Gastrocnemius medialis (tissue), 4 donors: ENCODE measurements at regions of chr1 and their contacts with region 1.

Region 1: DNA sequence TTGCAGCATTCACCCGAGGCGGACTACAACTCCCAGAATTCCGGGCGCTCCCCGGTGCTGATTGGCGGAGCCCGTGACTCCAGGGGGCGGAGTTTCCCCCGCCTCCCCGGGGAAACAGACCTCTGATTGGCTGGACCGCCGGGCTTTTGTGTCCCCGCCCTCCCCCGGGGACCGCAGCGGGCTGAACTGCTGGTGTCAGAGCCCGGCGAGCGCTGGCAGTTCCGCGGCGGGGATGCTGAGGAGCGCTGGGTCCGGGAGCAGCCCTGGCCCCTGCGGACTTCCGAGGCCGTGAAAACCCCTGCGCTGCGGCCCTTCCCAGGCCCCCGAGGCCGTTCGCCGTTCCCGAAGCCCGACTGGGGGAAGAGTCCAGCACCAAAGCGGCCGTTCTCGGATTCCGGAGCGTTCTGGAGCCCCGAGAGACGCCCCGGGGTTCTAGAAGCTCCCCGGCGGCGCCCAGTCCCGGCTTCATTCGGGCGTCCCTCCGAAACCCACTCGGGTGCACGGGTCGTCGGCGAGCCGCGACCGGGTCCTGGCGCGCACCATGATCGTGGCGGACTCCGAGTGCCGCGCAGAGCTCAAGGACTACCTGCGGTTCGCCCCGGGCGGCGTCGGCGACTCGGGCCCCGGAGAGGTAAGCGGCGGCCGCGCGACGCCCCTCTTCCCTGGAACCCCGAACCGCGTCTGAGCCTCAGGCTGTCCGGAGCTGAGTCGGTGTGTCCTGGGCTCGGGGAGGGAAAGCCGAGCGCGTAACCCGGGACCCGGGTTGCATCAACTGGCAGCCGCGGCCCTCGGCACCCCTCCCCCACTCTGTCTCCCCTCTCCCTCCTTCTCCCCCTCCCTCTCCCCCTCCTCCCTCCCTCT is at the start of gene SESN2:
- DNase-seq: peak; percentile 99 to 100
- ATAC-seq: peak; percentile 97
- H3K4me3 ChIP-seq: peak within 1 kb of the TSS; percentile 94 to 99 (median 96)
- H3K27ac ChIP-seq: peak within 1 kb of the TSS; percentile 92 to 98 (median 94)
- H3K4me1 ChIP-seq: peaks cover 29 to 33% of the 10 kb centered on the region in 2 donors
- H3K27me3 ChIP-seq: no peaks in the 10 kb centered on the region
- CTCF ChIP-seq: no peak
- POLR2A ChIP-seq: peak; percentile 99 to 100
- total RNA-seq, gene SESN2: 5.6 to 18.9 (median 12.4) TPM

Region 2: DNA sequence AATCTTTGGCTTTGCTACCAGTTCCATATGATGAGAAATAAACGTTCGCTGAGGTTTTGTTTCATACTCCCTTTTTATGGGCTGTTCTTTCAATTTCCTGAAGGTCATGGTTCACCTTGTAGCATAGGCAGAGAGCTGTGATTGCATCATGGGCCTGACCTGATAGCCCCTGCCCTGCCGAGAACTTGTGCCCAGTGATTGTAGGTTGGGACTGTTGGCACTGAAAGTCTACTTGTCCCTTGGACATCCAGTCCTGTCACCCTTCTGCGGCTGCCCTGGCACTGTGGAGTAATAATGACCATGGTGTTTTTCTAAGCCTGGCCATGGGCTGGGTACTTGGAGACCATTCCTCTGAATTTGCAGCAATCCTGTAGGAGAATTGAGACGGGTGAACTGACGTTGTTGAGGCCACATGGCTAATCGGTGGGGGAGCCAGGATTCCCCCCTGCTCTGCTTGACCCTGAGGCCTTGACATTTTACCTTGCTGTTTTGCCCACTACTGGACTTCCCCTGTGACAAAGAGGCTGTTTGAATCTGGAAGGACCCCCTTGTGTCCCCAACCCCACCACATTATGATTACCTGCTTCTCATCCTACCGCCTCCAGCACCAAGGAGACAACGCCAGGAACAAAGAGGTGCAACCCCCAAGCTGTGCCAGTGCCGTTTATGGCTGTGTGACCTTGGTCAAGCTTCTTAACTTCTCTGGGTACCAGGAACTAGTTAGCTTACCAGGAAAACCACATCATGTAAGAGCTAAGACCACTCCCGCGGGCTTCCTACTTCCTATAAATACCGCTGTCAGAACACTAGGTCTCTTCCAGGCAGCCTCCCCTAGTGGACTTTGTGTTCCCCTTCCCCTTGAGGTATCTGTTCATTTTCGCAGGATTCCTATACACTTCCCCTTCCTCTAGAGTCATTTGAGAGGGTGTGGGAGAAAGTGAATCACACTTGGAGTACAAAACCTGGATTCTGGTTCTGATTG is 23.2 kb after region 1 on chr1:
- in situ Hi-C with region 1: no loop called
- intact Hi-C with region 1: loop called (anchors 1 kb)
- DNase-seq: peak in 1 of 2 donors; percentile 17
- ATAC-seq: no peak
- H3K4me3 ChIP-seq: no peak overlapping the region
- H3K27ac ChIP-seq: no peak overlapping the region
- H3K4me1 ChIP-seq: peaks cover 12 to 13% of the 10 kb centered on the region in 2 donors
- H3K27me3 ChIP-seq: no peaks in the 10 kb centered on the region
- CTCF ChIP-seq: no peak
- POLR2A ChIP-seq: no peak

Region 3: GRCh38 chr1:28329395-28330153 is 70.0 kb after region 1 on chr1:
- in situ Hi-C with region 1: loop called in 2 of 4 experiments (anchors 10 kb)
- intact Hi-C with region 1: loop called (anchors 2 kb)
- DNase-seq: peak in 1 of 2 donors; percentile 13
- ATAC-seq: no peak
- H3K4me3 ChIP-seq: peak overlapping the region; percentile 68 to 84 (median 82)
- H3K27ac ChIP-seq: peak overlapping the region; percentile 85 to 94 (median 89)
- H3K4me1 ChIP-seq: peaks cover 14 to 17% of the 10 kb centered on the region in 2 donors
- H3K27me3 ChIP-seq: no peaks in the 10 kb centered on the region
- CTCF ChIP-seq: no peak
- POLR2A ChIP-seq: no peak

Region 4: DNA sequence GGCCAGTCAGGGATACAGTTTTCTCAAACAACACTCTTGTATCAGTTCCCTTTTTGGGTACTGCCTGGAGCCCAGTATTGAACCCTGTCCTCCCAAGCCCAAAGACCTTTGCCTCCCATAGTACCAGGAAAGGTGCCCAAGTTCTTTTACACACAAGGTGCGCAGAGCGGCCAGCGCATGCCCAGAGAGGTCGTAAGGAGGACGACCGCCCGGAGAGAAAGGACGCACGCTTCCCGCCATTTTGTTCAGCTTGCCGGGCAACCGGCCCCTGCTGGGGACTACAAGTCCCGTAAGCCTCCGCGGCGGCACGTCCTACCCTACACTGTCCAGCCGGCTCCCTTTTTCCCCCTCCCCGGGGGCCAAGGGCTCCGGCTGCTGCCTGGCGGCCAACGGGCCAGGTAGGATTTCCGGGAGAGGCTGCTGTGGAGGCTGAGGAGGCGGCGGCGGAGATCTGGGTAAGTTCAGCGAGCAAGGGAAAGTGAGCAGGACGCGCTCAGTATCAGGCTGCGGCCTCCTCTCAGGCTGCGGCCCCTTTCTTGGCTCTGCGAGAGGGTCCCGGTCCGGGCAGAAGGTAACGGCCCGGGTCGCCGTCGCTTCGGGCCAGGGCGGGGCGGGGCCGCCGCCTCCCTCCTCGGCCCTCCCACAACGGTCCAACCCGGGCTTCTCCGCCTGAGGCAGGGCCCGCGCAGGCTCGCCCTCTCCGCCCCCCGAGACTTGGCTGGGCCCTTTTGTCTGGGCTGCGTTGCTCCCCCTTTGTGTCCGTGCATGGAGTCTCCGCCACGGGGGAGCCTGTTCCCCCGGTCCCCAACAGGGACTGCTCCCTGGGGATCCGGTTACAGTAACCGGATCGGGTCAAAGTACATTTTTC is 110.1 kb after region 1 on chr1 and contains the start of gene PHACTR4:
- in situ Hi-C with region 1: no loop called
- intact Hi-C with region 1: loop called (anchors 1 kb)
- DNase-seq: peak; percentile 87 to 93
- ATAC-seq: peak; percentile 95 to 97
- H3K4me3 ChIP-seq: peak within 1 kb of the TSS; percentile 75 to 92 (median 86)
- H3K27ac ChIP-seq: peak within 1 kb of the TSS; percentile 88 to 95 (median 93)
- H3K4me1 ChIP-seq: peaks cover 9 to 16% of the 10 kb centered on the region in 2 donors
- H3K27me3 ChIP-seq: no peaks in the 10 kb centered on the region
- CTCF ChIP-seq: no peak
- POLR2A ChIP-seq: peak; percentile 88 to 90
- total RNA-seq, gene PHACTR4: 9.1 to 17.7 (median 13.4) TPM